ENCODE measurements at regions of chr2 and their contacts with region 1.

Region 1: GRCh38 chr2:61922714-61923113 is 17.2 kb downstream of the COMMD1 start:
- DNase-seq: no peak
- ATAC-seq: no peak
- H3K4me3 ChIP-seq: no peak overlapping the region
- H3K4me3 Mint-ChIP-seq: no peak overlapping the region
- H3K27ac ChIP-seq: no peak overlapping the region
- H3K27ac Mint-ChIP-seq: no peak overlapping the region
- H3K4me1 ChIP-seq: no peaks in the 10 kb centered on the region
- H3K4me1 Mint-ChIP-seq: peaks cover 0 to 8% (median 0%) of the 10 kb centered on the region in 3 donors
- H3K27me3 ChIP-seq: no peaks in the 10 kb centered on the region
- H3K27me3 Mint-ChIP-seq: no peaks in the 10 kb centered on the region

Region 2: GRCh38 chr2:60966507-60967405 is 956.0 kb before region 1 on chr2:
- CTCF ChIA-PET with region 1: no interaction called
- POLR2A ChIA-PET with region 1: no interaction called
- DNase-seq: peak in 1 of 35 experiments; percentile 16
- ATAC-seq: peak in 2 of 4 experiments; percentile 36 to 70
- H3K4me3 ChIP-seq: no peak overlapping the region
- H3K4me3 Mint-ChIP-seq: peak overlapping the region in 2 of 3 donors; percentile 55 to 67
- H3K27ac ChIP-seq: peak overlapping the region; percentile 77
- H3K27ac Mint-ChIP-seq: peak overlapping the region; percentile 26 to 89
- H3K4me1 ChIP-seq: peaks cover 9 to 26% of the 10 kb centered on the region in 2 experiments
- H3K4me1 Mint-ChIP-seq: peaks cover 37 to 52% (median 50%) of the 10 kb centered on the region in 3 donors
- H3K27me3 ChIP-seq: no peaks in the 10 kb centered on the region
- H3K27me3 Mint-ChIP-seq: no peaks in the 10 kb centered on the region

Region 3: GRCh38 chr2:61204781-61205531 is 717.8 kb before region 1 on chr2:
- CTCF ChIA-PET with region 1: no interaction called
- POLR2A ChIA-PET with region 1: interaction called in 1 of 2 experiments, 11 read pairs
- DNase-seq: no peak
- ATAC-seq: no peak
- H3K4me3 ChIP-seq: no peak overlapping the region
- H3K4me3 Mint-ChIP-seq: no peak overlapping the region
- H3K27ac ChIP-seq: no peak overlapping the region
- H3K27ac Mint-ChIP-seq: no peak overlapping the region
- H3K4me1 ChIP-seq: no peaks in the 10 kb centered on the region
- H3K4me1 Mint-ChIP-seq: no peaks in the 10 kb centered on the region
- H3K27me3 ChIP-seq: no peaks in the 10 kb centered on the region
- H3K27me3 Mint-ChIP-seq: no peaks in the 10 kb centered on the region

Region 4: GRCh38 chr2:61946661-61947060 is 23.9 kb after region 1 on chr2:
- CTCF ChIA-PET with region 1: no interaction called
- POLR2A ChIA-PET with region 1: no interaction called
- DNase-seq: no peak
- ATAC-seq: no peak
- H3K4me3 ChIP-seq: no peak overlapping the region
- H3K4me3 Mint-ChIP-seq: no peak overlapping the region
- H3K27ac ChIP-seq: no peak overlapping the region
- H3K27ac Mint-ChIP-seq: no peak overlapping the region
- H3K4me1 ChIP-seq: no peaks in the 10 kb centered on the region
- H3K4me1 Mint-ChIP-seq: peaks cover 0 to 1% (median 0%) of the 10 kb centered on the region in 3 donors
- H3K27me3 ChIP-seq: no peaks in the 10 kb centered on the region
- H3K27me3 Mint-ChIP-seq: no peaks in the 10 kb centered on the region

Region 5: GRCh38 chr2:62410015-62410453 is 487.3 kb after region 1 on chr2:
- CTCF ChIA-PET with region 1: interaction called, 7 to 23 read pairs
- POLR2A ChIA-PET with region 1: no interaction called
- DNase-seq: peak in 1 of 35 experiments; percentile 11
- ATAC-seq: no peak
- H3K4me3 ChIP-seq: no peak overlapping the region
- H3K4me3 Mint-ChIP-seq: no peak overlapping the region
- H3K27ac ChIP-seq: no peak overlapping the region
- H3K27ac Mint-ChIP-seq: no peak overlapping the region
- H3K4me1 ChIP-seq: peaks cover 0 to 9% of the 10 kb centered on the region in 2 experiments
- H3K4me1 Mint-ChIP-seq: peaks cover 0 to 11% (median 3%) of the 10 kb centered on the region in 3 donors
- H3K27me3 ChIP-seq: no peaks in the 10 kb centered on the region
- H3K27me3 Mint-ChIP-seq: no peaks in the 10 kb centered on the region